Posterior cingulate gyrus (tissue), 11 donors: ENCODE measurements at regions of chr15 and their contacts with region 1.

Region 1: GRCh38 chr15:27864086-27864485 is 235.0 kb downstream of the OCA2 start:
- DNase-seq: no peak

Region 2: GRCh38 chr15:27897481-27897880 is 33.4 kb after region 1 on chr15:
- intact Hi-C with region 1: loop called (anchors 5 kb)
- DNase-seq: peak in 1 of 10 donors; percentile 45

Region 3: GRCh38 chr15:28147801-28148200 is 283.7 kb after region 1 on chr15:
- intact Hi-C with region 1: no loop called
- DNase-seq: no peak